Astrocyte of the cerebellum (primary cell): ENCODE measurements at regions of chr1 and their contacts with region 1.

Region 1: DNA sequence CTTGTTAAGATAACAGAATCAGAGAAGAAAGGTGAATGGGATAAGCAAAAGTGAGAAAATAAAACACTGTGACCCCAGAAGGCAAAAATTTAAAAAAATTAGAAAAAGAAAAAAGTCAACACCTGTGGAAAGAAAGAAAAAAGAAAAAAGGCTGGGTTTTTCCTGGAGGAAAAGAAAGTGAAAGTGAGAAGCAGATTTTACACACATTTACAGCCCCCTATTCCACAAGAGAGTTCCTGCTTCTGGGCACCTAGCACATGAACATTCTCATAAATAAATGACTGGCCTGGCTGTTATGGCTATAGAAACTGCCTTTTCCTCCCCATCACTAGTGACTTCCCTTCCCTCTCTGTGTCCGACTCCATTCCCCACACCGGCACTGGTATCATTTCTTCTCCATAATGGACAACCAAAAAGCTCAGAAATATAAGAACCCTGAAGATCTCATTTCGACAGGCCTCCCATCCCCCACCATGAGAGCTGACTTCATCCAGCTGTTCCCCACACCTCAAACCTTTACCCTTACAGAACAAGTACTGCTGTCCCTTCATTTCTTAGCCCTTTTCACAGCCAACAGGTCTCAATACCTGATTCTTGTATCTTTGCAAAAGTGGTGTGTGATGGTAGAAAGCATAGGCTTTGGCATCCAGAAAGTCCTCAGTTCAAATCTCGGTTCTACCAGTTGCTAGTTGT is 12.6 kb downstream of the MTF1 start:
- DNase-seq: no peak
- H3K4me3 ChIP-seq: no peak overlapping the region
- CTCF ChIP-seq: no peak

Region 2: GRCh38 chr1:37793773-37794371 is 52.9 kb before region 1 on chr1 and contains the start of gene MANEAL:
- in situ Hi-C with region 1: no loop called
- DNase-seq: no peak
- H3K4me3 ChIP-seq: peak within 1 kb of the TSS; percentile 36
- CTCF ChIP-seq: no peak

Region 3: DNA sequence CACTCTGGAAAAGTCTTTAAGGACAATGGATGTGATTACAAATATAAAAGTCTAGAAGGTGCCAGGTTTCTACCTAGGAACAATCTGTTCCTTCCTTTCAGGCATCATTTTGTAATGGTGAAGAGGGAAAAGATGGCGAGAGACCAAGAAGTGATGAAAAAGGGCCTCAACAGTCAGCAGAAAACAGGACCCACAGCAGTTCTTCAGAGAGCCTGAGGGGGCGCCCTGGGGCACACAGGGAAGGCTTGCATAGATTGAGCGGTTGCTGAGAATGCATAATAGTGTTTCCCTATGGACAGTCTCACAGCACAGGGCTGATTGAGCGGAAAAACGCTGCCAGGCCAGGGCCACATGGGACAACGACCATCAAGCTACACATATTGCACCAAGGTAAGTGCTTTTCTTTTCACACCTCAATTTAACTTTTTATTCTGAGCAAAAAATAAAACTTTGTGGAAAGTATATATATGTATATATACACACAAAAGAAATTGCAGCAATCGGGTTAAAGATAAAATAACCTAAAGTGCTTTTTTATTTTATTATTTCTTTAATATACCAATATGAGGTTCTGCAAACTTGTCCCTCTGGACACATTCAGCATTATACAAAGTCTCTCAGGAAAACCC is 35.7 kb before region 1 on chr1:
- in situ Hi-C with region 1: loop called (anchors 5 kb)
- DNase-seq: peak; percentile 57
- H3K4me3 ChIP-seq: no peak overlapping the region
- CTCF ChIP-seq: peak; percentile 93